Left lung (tissue), 14 donors: ENCODE measurements at regions of chr16 and their contacts with region 1.

Region 1: GRCh38 chr16:69123910-69124309 is 8.5 kb downstream of the CHTF8 start:
- DNase-seq: peak in 1 of 4 donors; percentile 76
- ATAC-seq: peak; percentile 83
- H3K4me3 ChIP-seq: no peak overlapping the region
- H3K27ac ChIP-seq: no peak overlapping the region
- H3K4me1 ChIP-seq: peaks cover 0 to 6% of the 10 kb centered on the region in 2 donors
- H3K27me3 ChIP-seq: no peaks in the 10 kb centered on the region
- CTCF ChIP-seq: peak; percentile 50 to 69

Region 2: DNA sequence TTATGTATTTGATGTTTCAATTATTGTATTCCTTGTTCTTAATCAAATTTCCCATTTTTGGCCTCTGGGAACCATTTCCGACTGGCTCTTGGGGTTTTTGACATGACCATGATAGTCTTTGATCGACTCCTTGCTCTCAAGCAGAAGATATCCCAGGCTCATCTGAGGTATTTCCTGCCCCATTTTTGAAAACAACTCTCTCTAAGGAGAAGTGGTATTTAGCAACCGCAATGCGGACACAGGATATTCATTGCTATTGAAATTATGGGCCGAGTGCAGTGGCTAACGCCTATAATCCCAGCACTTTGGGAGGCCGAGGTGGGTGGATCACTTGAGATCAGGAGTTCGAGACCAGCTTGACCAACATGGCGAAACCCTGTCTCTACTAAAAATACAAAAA is 275.1 kb before region 1 on chr16:
- intact Hi-C with region 1: loop called in 1 of 2 experiments (anchors 5 kb)
- DNase-seq: no peak
- ATAC-seq: no peak
- H3K4me3 ChIP-seq: no peak overlapping the region
- H3K27ac ChIP-seq: no peak overlapping the region
- H3K4me1 ChIP-seq: peaks cover 7 to 16% of the 10 kb centered on the region in 2 donors
- H3K27me3 ChIP-seq: no peaks in the 10 kb centered on the region
- CTCF ChIP-seq: no peak